ENCODE measurements at regions of chr16 and their contacts with region 1.

Region 1: DNA sequence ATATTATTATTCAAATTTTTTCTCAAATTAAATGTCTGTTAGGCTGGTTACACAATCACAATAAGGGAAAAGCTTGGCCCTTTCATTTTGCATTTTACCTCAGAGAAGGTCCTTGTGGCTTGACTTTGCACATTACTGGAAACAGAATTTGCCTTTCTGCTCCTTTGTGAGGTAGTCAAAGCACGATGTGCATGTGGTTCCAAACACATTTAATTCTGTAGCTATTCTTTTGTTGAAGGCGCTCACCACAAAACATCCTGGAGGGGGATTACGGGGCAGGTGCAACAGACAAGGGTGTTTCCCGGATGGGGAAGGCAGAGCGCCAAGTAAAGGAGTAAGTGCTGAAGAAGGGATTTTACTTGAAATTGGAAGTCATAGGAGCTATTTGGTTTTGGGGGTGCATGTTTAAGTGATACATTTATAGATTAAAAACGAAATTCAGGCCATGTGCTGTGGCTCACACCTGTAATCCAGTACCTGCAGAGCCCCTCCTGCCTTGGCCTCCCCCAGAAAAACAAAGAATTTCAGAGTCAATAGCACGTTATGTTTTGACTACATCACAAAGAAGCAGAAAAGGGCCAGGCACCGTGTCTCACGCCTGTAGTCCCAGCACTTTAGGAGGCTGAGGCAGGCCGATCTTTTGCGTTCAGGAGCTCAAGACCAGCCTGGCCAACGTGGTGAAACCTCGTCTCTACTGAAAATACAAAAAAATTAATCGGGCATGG is 31.2 kb upstream of the TENT4B start:
- DNase-seq: no peak
- ATAC-seq: no peak
- H3K4me3 ChIP-seq: no peak overlapping the region
- H3K27ac ChIP-seq: no peak overlapping the region
- H3K4me1 ChIP-seq: no peaks in the 10 kb centered on the region
- H3K27me3 ChIP-seq: peaks cover 3% of the 10 kb centered on the region
- CTCF ChIP-seq: no peak
- POLR2A ChIP-seq: no peak
- RAD21 ChIP-seq: no peak

Region 2: GRCh38 chr16:50185005-50185505 is 63.2 kb after region 1 on chr16:
- CTCF ChIA-PET with region 1: no interaction called
- POLR2A ChIA-PET with region 1: no interaction called
- dilution Hi-C with region 1: no loop called
- in situ Hi-C with region 1: loop called (anchors 10 kb)
- intact Hi-C with region 1: no loop called
- DNase-seq: peak; percentile 75
- ATAC-seq: peak; percentile 79
- H3K4me3 ChIP-seq: no peak overlapping the region
- H3K27ac ChIP-seq: peak overlapping the region; percentile 77
- H3K4me1 ChIP-seq: peaks cover 12% of the 10 kb centered on the region
- H3K27me3 ChIP-seq: no peaks in the 10 kb centered on the region
- CTCF ChIP-seq: no peak
- POLR2A ChIP-seq: no peak
- RAD21 ChIP-seq: no peak

Measured in IMR-90 (cell line).